CD8-positive, alpha-beta T cell (primary cell): ENCODE measurements at regions of chr16 and their contacts with region 1.

Region 1: GRCh38 chr16:80526425-80527061 is 14.2 kb upstream of the DYNLRB2 start:
- DNase-seq: peak; percentile 10 to 79 (median 49)
- ATAC-seq: peak; percentile 82
- H3K4me3 ChIP-seq: no peak overlapping the region
- H3K4me3 Mint-ChIP-seq: no peak overlapping the region
- H3K27ac ChIP-seq: no peak overlapping the region
- H3K27ac Mint-ChIP-seq: no peak overlapping the region
- H3K4me1 ChIP-seq: peaks cover 4% of the 10 kb centered on the region
- H3K4me1 Mint-ChIP-seq: no peaks in the 10 kb centered on the region
- H3K27me3 ChIP-seq: no peaks in the 10 kb centered on the region
- H3K27me3 Mint-ChIP-seq: no peaks in the 10 kb centered on the region
- CTCF ChIP-seq: peak; percentile 86

Region 2: DNA sequence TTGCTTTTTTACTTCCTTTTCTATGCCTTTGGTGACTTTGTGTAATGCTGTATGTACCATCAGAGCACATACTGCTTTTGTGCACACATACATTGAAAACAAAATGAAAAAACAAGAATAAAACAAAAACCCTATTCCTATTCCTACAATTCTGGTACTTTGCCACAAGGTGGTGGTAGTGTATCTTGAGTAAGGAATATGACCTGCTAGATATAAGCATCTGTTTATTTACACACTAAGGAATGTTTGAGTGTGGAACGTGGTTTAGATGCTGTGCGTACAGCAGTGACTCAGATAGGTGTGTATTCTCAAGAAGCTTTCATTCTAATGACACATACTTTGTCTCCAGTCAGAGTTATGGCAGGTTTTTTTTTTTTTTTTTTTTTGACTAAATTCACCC is 1820.8 kb before region 1 on chr16:
- CTCF ChIA-PET with region 1: interaction called, 4 read pairs
- POLR2A ChIA-PET with region 1: no interaction called
- intact Hi-C with region 1: loop called in 1 of 2 experiments (anchors 5 kb)
- DNase-seq: peak in 2 of 9 experiments; percentile 53 to 69
- ATAC-seq: peak; percentile 69
- H3K4me3 ChIP-seq: no peak overlapping the region
- H3K4me3 Mint-ChIP-seq: no peak overlapping the region
- H3K27ac ChIP-seq: no peak overlapping the region
- H3K27ac Mint-ChIP-seq: no peak overlapping the region
- H3K4me1 ChIP-seq: no peaks in the 10 kb centered on the region
- H3K4me1 Mint-ChIP-seq: peaks cover 6% of the 10 kb centered on the region
- H3K27me3 ChIP-seq: no peaks in the 10 kb centered on the region
- H3K27me3 Mint-ChIP-seq: no peaks in the 10 kb centered on the region
- CTCF ChIP-seq: peak; percentile 46

Region 3: DNA sequence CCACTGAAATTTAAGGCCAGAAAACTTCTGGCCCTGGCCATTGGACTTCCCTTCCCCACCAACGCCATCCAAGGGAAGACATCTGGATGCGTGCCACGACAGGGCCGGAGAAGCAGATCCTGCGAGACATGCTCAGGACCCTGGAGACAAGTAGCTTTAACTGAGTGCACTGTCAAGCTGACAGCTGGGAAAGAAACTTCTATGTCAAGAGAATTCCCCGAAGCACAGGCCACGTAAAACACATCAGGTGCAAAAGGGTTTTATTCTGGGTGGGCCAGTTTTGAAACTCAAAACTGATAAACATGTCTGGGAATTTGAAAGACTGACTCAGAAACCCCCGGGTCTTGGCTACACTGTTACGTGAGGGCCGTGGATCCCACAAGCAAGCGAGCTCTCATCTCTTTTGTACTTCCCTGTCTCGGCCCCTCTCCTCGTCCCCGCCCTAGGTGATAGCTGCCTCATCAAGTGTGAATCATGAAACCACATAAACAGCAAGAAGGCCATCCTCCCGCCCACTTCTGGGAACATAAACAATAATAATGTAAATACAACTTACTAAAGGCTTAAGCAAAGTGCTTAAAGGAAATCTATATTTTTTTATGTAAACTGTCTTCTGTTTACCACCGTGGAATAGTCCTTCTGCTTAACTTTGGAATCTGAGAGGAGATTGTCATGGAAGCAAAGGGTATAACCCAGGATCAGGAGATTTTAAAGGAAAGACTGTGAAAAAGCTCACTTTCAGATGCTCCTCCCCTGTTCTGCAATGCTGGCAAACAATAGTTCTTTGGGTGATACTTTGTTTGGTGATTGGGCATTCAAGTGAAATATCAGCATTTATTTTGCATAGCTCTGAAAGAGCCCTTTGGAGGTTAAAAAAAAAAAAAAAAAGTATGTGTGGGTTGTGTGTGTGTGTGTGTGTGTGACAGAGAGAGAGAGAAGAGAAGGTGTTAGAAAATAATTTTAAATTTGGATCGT is 520.0 kb before region 1 on chr16:
- CTCF ChIA-PET with region 1: no interaction called
- POLR2A ChIA-PET with region 1: no interaction called
- intact Hi-C with region 1: loop called in 1 of 2 experiments (anchors 10 kb)
- DNase-seq: peak in 1 of 9 experiments; percentile 18
- ATAC-seq: no peak
- H3K4me3 ChIP-seq: no peak overlapping the region
- H3K4me3 Mint-ChIP-seq: no peak overlapping the region
- H3K27ac ChIP-seq: no peak overlapping the region
- H3K27ac Mint-ChIP-seq: no peak overlapping the region
- H3K4me1 ChIP-seq: no peaks in the 10 kb centered on the region
- H3K4me1 Mint-ChIP-seq: no peaks in the 10 kb centered on the region
- H3K27me3 ChIP-seq: no peaks in the 10 kb centered on the region
- H3K27me3 Mint-ChIP-seq: no peaks in the 10 kb centered on the region
- CTCF ChIP-seq: no peak

Region 4: GRCh38 chr16:80158766-80159165 is 367.8 kb before region 1 on chr16:
- CTCF ChIA-PET with region 1: no interaction called
- POLR2A ChIA-PET with region 1: no interaction called
- intact Hi-C with region 1: no loop called
- DNase-seq: no peak
- ATAC-seq: no peak
- H3K4me3 ChIP-seq: no peak overlapping the region
- H3K4me3 Mint-ChIP-seq: no peak overlapping the region
- H3K27ac ChIP-seq: no peak overlapping the region
- H3K27ac Mint-ChIP-seq: no peak overlapping the region
- H3K4me1 ChIP-seq: no peaks in the 10 kb centered on the region
- H3K4me1 Mint-ChIP-seq: no peaks in the 10 kb centered on the region
- H3K27me3 ChIP-seq: no peaks in the 10 kb centered on the region
- H3K27me3 Mint-ChIP-seq: peaks cover 13% of the 10 kb centered on the region
- CTCF ChIP-seq: no peak

Region 5: DNA sequence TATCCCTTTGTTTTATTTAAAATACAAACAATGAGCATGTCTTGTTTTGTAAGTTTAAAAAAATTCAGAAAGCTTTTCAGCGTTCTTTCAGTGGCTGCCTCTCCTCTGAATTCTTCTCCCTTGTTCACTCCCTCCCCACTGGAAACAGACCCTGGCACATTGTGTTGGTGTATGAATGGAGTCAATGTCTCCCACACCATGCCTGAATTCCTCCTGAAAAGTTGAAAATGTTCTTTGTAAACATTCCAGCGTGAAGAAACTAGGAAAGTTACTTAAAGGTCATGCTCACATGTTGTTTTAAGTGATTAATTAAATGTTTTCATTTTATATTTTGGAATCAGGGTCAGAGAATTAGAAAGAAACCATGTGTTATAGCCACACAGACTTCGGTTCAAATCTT is 122.6 kb before region 1 on chr16:
- CTCF ChIA-PET with region 1: no interaction called
- POLR2A ChIA-PET with region 1: no interaction called
- intact Hi-C with region 1: no loop called
- DNase-seq: no peak
- ATAC-seq: no peak
- H3K4me3 ChIP-seq: no peak overlapping the region
- H3K4me3 Mint-ChIP-seq: no peak overlapping the region
- H3K27ac ChIP-seq: no peak overlapping the region
- H3K27ac Mint-ChIP-seq: no peak overlapping the region
- H3K4me1 ChIP-seq: no peaks in the 10 kb centered on the region
- H3K4me1 Mint-ChIP-seq: no peaks in the 10 kb centered on the region
- H3K27me3 ChIP-seq: peaks cover 0 to 4% of the 10 kb centered on the region in 2 experiments
- H3K27me3 Mint-ChIP-seq: peaks cover 18% of the 10 kb centered on the region
- CTCF ChIP-seq: no peak

Region 6: DNA sequence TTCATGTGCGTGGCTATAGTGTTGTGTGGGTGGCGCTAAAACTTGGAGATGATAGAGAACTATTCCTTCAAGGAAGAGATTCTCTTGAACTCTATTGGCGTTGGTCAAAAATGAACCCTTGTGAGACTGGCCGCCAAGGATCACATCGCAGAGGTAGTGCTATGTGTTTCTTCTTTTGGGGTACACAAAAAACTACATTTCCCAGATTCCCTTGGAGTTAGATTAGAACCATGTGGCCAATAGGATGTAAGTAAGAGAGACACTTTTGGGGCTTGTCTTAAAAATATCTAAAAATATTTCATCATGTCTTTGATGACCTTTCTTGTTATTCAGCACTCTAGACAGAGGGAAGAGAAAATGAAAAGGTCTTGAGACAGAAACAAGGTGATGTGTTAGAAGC is 11.2 kb before region 1 on chr16:
- CTCF ChIA-PET with region 1: interaction called, 13 read pairs
- POLR2A ChIA-PET with region 1: no interaction called
- intact Hi-C with region 1: no loop called
- DNase-seq: no peak
- ATAC-seq: no peak
- H3K4me3 ChIP-seq: no peak overlapping the region
- H3K4me3 Mint-ChIP-seq: no peak overlapping the region
- H3K27ac ChIP-seq: no peak overlapping the region
- H3K27ac Mint-ChIP-seq: no peak overlapping the region
- H3K4me1 ChIP-seq: peaks cover 19% of the 10 kb centered on the region
- H3K4me1 Mint-ChIP-seq: peaks cover 17% of the 10 kb centered on the region
- H3K27me3 ChIP-seq: peaks cover 0 to 3% of the 10 kb centered on the region in 2 experiments
- H3K27me3 Mint-ChIP-seq: peaks cover 6% of the 10 kb centered on the region
- CTCF ChIP-seq: no peak

Region 7: GRCh38 chr16:80824718-80825364 is 298.3 kb after region 1 on chr16:
- CTCF ChIA-PET with region 1: interaction called, 34 read pairs
- POLR2A ChIA-PET with region 1: no interaction called
- intact Hi-C with region 1: loop called (anchors 1 to 2 kb)
- DNase-seq: peak in 5 of 9 experiments; percentile 9 to 74 (median 25)
- ATAC-seq: no peak
- H3K4me3 ChIP-seq: no peak overlapping the region
- H3K4me3 Mint-ChIP-seq: no peak overlapping the region
- H3K27ac ChIP-seq: no peak overlapping the region
- H3K27ac Mint-ChIP-seq: no peak overlapping the region
- H3K4me1 ChIP-seq: no peaks in the 10 kb centered on the region
- H3K4me1 Mint-ChIP-seq: peaks cover 2% of the 10 kb centered on the region
- H3K27me3 ChIP-seq: no peaks in the 10 kb centered on the region
- H3K27me3 Mint-ChIP-seq: peaks cover 6% of the 10 kb centered on the region
- CTCF ChIP-seq: peak; percentile 92

Region 8: DNA sequence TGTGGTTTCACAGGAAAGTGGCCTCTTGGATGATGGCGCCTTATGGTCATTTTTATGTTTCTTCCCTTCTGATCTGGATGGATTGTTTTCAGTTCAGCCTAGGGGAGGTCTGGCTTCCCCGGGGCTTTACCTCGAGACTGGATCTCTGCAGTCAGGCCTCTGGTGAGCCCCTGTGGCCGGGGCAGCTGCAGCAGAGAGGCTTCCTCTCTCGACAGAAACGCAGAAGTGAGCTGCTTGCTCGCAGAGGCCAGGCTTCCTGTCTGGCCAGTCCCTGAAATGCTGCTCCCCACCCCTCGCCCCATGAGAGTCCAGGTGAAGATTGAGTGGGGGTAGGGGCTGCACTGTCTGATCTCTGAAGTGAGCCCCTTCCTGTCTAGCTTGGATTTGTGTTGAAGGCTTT is 1296.6 kb after region 1 on chr16:
- CTCF ChIA-PET with region 1: no interaction called
- POLR2A ChIA-PET with region 1: no interaction called
- intact Hi-C with region 1: no loop called
- DNase-seq: peak in 3 of 9 experiments; percentile 34 to 60 (median 57)
- ATAC-seq: peak; percentile 49
- H3K4me3 ChIP-seq: no peak overlapping the region
- H3K4me3 Mint-ChIP-seq: no peak overlapping the region
- H3K27ac ChIP-seq: peak overlapping the region; percentile 10 to 82
- H3K27ac Mint-ChIP-seq: peak overlapping the region; percentile 84
- H3K4me1 ChIP-seq: peaks cover 5% of the 10 kb centered on the region
- H3K4me1 Mint-ChIP-seq: peaks cover 17% of the 10 kb centered on the region
- H3K27me3 ChIP-seq: no peaks in the 10 kb centered on the region
- H3K27me3 Mint-ChIP-seq: no peaks in the 10 kb centered on the region
- CTCF ChIP-seq: no peak